Activated CD4-positive, alpha-beta memory T cell treated with anti-CD3 and anti-CD28 coated beads for 36 hours (primary cell): ENCODE measurements at regions of chr6 and their contacts with region 1.

Region 1: DNA sequence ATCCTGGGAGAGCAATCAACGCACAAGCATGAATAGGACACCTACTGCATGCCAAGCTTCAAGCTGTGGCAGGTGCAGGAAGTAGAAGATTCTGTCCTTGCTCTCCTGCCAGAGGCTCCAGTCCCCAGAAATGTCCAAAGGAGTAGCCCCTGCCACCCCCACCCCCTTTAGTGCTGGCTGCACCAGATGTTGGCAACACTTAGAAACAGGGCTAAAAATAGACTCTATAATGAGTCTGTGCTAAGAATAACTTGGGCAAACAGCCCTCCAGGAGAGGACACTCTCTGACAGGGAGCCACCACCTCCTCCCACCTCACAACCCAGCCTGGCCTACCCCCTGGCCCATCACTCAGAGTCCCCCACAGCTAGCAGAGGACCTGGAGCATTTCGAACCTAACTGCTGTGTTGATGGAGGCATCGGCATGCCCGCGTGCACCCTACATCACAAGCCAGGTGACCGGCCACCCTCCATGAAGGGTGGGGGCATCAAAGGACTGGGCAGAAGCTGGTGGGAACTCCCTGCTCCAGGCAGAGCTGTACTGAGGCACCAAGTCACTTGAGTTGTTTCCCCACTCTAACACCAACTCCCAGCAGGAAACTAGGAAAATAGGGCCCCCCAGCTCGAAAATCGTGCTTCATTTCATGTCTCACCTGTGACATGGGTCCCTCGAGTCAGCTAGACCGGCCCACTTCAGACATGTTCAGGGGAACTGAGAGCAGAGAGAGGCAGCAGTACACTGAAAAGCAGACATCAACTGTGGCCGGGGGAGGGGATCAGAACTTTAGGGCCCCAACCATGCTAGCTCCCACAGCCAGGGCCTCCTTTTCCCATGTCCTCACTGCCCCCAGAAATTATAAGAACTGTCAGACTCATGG is 18.7 kb downstream of the TFEB start:
- DNase-seq: no peak
- H3K4me3 Mint-ChIP-seq: no peak overlapping the region
- H3K27ac Mint-ChIP-seq: no peak overlapping the region
- H3K4me1 Mint-ChIP-seq: peaks cover 23% of the 10 kb centered on the region
- H3K27me3 Mint-ChIP-seq: no peaks in the 10 kb centered on the region

Region 2: DNA sequence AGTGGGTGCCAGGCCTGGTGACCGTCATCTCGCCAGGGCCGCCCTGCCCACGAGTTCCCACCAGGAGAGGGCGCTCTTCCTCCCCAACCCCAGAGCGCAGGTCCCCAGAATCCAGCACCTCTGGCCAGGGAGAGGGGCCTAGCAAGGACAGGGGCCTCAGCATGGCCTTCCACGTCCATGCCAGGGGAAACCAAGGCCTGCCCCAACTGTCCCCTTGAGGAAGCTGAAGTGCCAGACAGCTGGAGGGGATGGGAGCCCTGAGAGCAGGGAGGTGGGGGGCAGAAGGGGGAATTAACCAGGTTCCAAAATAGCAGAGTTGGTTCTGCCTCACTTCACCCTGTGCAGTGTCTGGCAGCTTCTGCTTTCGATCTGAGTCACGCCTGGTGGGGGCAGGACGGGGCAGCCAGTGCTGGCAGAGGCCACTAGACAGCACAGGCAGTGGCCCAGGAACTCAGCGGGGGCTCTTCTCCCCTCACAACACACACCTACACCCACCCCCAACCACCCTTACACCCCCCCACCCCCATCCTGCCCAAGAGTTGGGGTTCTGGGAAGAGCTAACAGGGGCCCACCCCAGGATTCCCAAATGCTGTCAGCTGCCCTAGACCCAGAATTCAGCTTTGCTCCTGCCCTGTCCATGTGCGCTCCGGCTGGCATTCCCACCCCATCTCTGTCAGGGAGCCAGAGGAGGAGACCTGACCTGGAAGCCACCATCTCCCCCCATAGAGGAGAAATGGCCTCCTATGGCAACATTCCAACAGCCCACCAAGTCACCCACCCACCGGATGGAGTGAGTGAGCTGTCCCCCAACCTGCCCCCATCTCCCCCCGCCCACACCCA is 10.5 kb before region 1 on chr6:
- CTCF ChIA-PET with region 1: interaction called, 18 read pairs
- POLR2A ChIA-PET with region 1: no interaction called
- intact Hi-C with region 1: no loop called
- DNase-seq: peak; percentile 90
- H3K4me3 Mint-ChIP-seq: peak overlapping the region; percentile 38
- H3K27ac Mint-ChIP-seq: peak overlapping the region; percentile 89
- H3K4me1 Mint-ChIP-seq: peaks cover 36% of the 10 kb centered on the region
- H3K27me3 Mint-ChIP-seq: no peaks in the 10 kb centered on the region

Region 3: GRCh38 chr6:42050266-42051032 is 333.7 kb after region 1 on chr6 and contains the start of gene TAF8:
- CTCF ChIA-PET with region 1: no interaction called
- POLR2A ChIA-PET with region 1: no interaction called
- intact Hi-C with region 1: no loop called
- DNase-seq: peak; percentile 95
- H3K4me3 Mint-ChIP-seq: peak within 1 kb of the TSS; percentile 97
- H3K27ac Mint-ChIP-seq: peak within 1 kb of the TSS; percentile 99
- H3K4me1 Mint-ChIP-seq: peaks cover 67% of the 10 kb centered on the region
- H3K27me3 Mint-ChIP-seq: no peaks in the 10 kb centered on the region
- total RNA-seq, gene TAF8: 57.7 to 58.7 TPM